ENCODE measurements at regions of chr6 and their contacts with region 1.

Region 1: GRCh38 chr6:36027501-36028087 is at the start of gene MAPK14:
- DNase-seq: peak; percentile 98
- H3K4me3 ChIP-seq: peak within 1 kb of the TSS; percentile 85
- H3K27ac ChIP-seq: peak within 1 kb of the TSS; percentile 87
- H3K4me1 ChIP-seq: peaks cover 8% of the 10 kb centered on the region
- H3K27me3 ChIP-seq: no peaks in the 10 kb centered on the region
- CTCF ChIP-seq: peak; percentile 75
- total RNA-seq, gene MAPK14: 60.4 and 70.7 TPM in 2 replicates

Region 2: GRCh38 chr6:35920793-35921732 is 106.5 kb before region 1 on chr6 and contains the start of gene SRPK1:
- CTCF ChIA-PET with region 1: no interaction called
- POLR2A ChIA-PET with region 1: interaction called, 6 read pairs
- intact Hi-C with region 1: loop called (anchors 1 kb)
- DNase-seq: peak; percentile 69 to 87
- H3K4me3 ChIP-seq: peak within 1 kb of the TSS; percentile 97
- H3K27ac ChIP-seq: peak within 1 kb of the TSS; percentile 74
- H3K4me1 ChIP-seq: peaks cover 29% of the 10 kb centered on the region
- H3K27me3 ChIP-seq: no peaks in the 10 kb centered on the region
- CTCF ChIP-seq: no peak
- total RNA-seq, gene SRPK1: 79.0 and 98.7 TPM in 2 replicates

Region 3: GRCh38 chr6:35973670-35974222 is 53.8 kb before region 1 on chr6:
- CTCF ChIA-PET with region 1: no interaction called
- POLR2A ChIA-PET with region 1: no interaction called
- intact Hi-C with region 1: loop called (anchors 5 kb)
- DNase-seq: peak; percentile 62 to 91
- H3K4me3 ChIP-seq: no peak overlapping the region
- H3K27ac ChIP-seq: peak overlapping the region; percentile 87
- H3K4me1 ChIP-seq: peaks cover 41% of the 10 kb centered on the region
- H3K27me3 ChIP-seq: no peaks in the 10 kb centered on the region
- CTCF ChIP-seq: no peak

Region 4: GRCh38 chr6:36094753-36095496 is 67.3 kb after region 1 on chr6:
- CTCF ChIA-PET with region 1: interaction called, 4 read pairs
- POLR2A ChIA-PET with region 1: no interaction called
- intact Hi-C with region 1: loop called (anchors 1 kb)
- DNase-seq: peak; percentile 66
- H3K4me3 ChIP-seq: no peak overlapping the region
- H3K27ac ChIP-seq: peak overlapping the region; percentile 35
- H3K4me1 ChIP-seq: no peaks in the 10 kb centered on the region; the same call in 1 of the 2 replicates
- H3K27me3 ChIP-seq: no peaks in the 10 kb centered on the region
- CTCF ChIP-seq: peak; percentile 97

Region 5: GRCh38 chr6:36196880-36197548 is 169.4 kb after region 1 on chr6:
- CTCF ChIA-PET with region 1: no interaction called
- POLR2A ChIA-PET with region 1: no interaction called
- intact Hi-C with region 1: loop called (anchors 2 kb)
- DNase-seq: peak; percentile 89 to 97
- H3K4me3 ChIP-seq: peak overlapping the region; percentile 72
- H3K27ac ChIP-seq: peak overlapping the region; percentile 39; the same call in 1 of the 2 replicates
- H3K4me1 ChIP-seq: peaks cover 22% of the 10 kb centered on the region
- H3K27me3 ChIP-seq: no peaks in the 10 kb centered on the region
- CTCF ChIP-seq: no peak

Region 6: DNA sequence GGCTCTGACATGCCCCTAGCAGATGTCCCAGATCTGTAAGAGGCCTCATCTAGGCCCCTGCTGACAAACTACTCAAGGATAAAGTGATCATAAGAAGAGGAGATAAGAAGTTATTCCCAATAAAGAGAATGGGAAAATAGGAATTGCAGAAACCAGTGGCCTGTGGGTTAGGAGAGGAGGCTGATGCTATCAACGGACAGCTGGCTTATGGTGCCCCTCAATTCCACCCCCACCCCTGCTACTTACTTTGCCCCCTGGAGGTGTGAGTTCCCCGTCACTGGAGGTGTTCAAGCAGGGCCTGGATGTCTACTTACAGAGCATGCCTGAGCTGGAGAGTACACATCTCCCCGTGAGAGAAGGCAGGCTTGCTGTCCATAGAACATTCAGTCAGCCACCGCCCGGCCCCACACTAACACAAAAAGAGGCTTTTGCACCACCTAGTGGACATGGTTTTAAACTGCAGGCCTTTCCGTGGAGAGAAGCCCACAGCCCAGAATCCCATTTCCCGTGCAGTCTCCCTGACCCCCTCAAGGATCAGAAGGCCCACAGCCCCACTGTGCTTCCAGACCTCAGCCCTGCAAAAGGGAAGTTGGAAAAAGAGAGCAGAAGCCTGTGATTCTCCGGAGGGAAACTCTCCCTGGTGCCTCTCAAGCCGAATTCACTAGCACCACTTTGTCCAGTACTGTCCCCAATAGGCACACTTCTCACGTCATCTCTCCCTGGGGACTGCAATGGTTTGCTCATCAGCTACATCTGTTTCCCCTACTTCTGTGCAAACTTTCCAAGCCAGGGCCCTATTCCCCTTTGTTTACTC is 332.9 kb after region 1 on chr6:
- CTCF ChIA-PET with region 1: no interaction called
- POLR2A ChIA-PET with region 1: no interaction called
- intact Hi-C with region 1: loop called (anchors 2 kb)
- DNase-seq: peak; percentile 43 to 70
- H3K4me3 ChIP-seq: no peak overlapping the region
- H3K27ac ChIP-seq: no peak overlapping the region
- H3K4me1 ChIP-seq: 0 out of 2 replicates have a peak, but pooled peaks cover 7% of the 10 kb centered on the region
- H3K27me3 ChIP-seq: no peaks in the 10 kb centered on the region
- CTCF ChIP-seq: peak; percentile 90

Region 7: DNA sequence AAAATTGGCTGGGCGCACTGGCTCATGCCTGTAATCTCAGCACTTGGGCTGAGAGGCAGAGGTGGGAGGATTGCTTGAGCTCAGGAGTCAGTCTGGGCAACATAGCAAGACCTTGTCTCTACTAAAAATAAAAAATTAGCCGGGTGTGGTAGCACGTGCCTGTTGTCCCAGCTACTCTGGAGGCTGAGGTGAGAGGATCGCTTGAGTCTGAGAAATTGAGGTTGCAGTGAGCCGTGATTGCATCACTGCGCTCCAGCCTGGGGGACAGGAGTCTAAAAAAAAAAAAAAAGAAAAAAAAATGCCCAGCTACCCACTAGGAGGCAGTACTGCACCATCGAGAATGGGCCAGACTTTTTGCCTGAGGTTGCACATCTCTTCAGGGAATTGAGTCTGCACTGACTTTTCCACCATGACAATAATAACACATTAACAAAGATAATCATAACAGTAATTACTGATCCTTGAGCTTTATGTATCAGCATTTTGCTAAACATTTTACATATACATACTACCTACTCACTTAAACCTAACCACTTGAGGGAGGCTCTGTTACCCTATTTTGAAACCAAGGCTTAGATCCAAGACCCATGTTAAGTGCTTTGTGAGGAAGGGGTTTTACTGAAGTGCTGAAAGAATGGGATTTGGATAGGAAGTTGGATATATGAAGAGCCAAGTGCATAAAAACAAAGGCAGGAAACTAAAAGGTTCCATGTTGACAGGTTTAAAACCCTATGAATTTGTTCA is 587.6 kb after region 1 on chr6:
- CTCF ChIA-PET with region 1: no interaction called
- POLR2A ChIA-PET with region 1: no interaction called
- intact Hi-C with region 1: loop called (anchors 5 kb)
- DNase-seq: peak; percentile 43 to 63
- H3K4me3 ChIP-seq: no peak overlapping the region
- H3K27ac ChIP-seq: no peak overlapping the region
- H3K4me1 ChIP-seq: peaks cover 24% of the 10 kb centered on the region
- H3K27me3 ChIP-seq: no peaks in the 10 kb centered on the region
- CTCF ChIP-seq: peak; percentile 83